ENCODE measurements at regions of chr10 and their contacts with region 1.

Region 1: GRCh38 chr10:113379091-113379490 is 173.8 kb upstream of the HABP2 start:
- DNase-seq: no peak
- H3K4me3 ChIP-seq: no peak overlapping the region
- H3K27ac ChIP-seq: no peak overlapping the region
- H3K4me1 ChIP-seq: no peaks in the 10 kb centered on the region
- H3K27me3 ChIP-seq: peaks cover 2% of the 10 kb centered on the region
- CTCF ChIP-seq: no peak

Region 2: DNA sequence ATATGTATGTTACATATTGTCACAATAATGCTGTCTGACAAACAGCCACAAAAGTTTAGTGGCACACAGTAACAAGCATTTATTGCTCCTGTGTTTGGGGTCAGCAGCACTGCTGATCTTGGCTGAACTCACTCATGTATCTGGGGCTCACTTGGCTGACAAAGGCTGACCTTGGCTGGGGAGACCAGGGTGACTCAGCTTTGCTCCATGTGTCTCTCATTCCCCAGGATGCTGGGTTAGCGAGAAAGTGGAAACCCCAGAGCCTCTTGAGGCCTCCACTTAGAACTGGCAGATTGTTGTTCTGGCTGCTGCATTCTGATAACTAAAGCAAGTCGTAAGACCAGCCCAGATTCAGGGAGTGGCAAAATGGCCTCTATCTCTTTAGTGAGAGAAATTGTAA is 43.5 kb before region 1 on chr10:
- CTCF ChIA-PET with region 1: no interaction called
- dilution Hi-C with region 1: no loop called
- in situ Hi-C with region 1: no loop called
- intact Hi-C with region 1: no loop called
- DNase-seq: peak; percentile 6
- H3K4me3 ChIP-seq: no peak overlapping the region
- H3K27ac ChIP-seq: no peak overlapping the region
- H3K4me1 ChIP-seq: no peaks in the 10 kb centered on the region
- H3K27me3 ChIP-seq: no peaks in the 10 kb centered on the region
- CTCF ChIP-seq: no peak

Region 3: GRCh38 chr10:113412161-113412560 is 33.1 kb after region 1 on chr10:
- CTCF ChIA-PET with region 1: no interaction called
- dilution Hi-C with region 1: loop called (anchors 5 kb)
- in situ Hi-C with region 1: no loop called
- intact Hi-C with region 1: no loop called
- DNase-seq: no peak
- H3K4me3 ChIP-seq: no peak overlapping the region
- H3K27ac ChIP-seq: no peak overlapping the region
- H3K4me1 ChIP-seq: no peaks in the 10 kb centered on the region
- H3K27me3 ChIP-seq: peaks cover 2% of the 10 kb centered on the region
- CTCF ChIP-seq: no peak

Region 4: GRCh38 chr10:113498997-113499396 is 119.9 kb after region 1 on chr10:
- CTCF ChIA-PET with region 1: no interaction called
- dilution Hi-C with region 1: no loop called
- in situ Hi-C with region 1: no loop called
- intact Hi-C with region 1: no loop called
- DNase-seq: peak; percentile 59
- H3K4me3 ChIP-seq: no peak overlapping the region
- H3K27ac ChIP-seq: no peak overlapping the region
- H3K4me1 ChIP-seq: peaks cover 11% of the 10 kb centered on the region
- H3K27me3 ChIP-seq: no peaks in the 10 kb centered on the region
- CTCF ChIP-seq: no peak

Region 5: DNA sequence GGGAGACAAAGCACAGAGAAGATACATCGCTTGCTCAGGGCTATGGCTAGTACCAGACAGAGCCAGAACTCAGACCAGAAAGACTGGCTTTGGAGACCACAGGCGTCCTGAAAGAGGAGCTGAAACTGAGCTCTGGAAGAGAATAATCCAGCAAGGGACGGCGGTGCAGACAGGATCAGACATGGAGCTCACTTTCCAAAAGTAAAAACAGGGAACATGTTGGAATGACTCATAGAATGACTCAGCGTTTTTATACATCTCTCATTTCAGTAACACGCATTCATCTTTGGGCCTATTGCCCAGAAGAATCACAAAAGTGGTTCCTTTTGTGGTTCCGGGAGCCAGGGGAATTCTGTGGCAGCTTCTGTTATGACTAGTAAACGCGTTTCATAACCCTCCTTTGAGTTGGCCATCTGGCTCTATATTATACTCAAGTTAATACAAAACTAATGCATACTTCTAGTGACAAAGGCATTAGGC is 409.6 kb after region 1 on chr10:
- CTCF ChIA-PET with region 1: no interaction called
- dilution Hi-C with region 1: no loop called
- in situ Hi-C with region 1: no loop called
- intact Hi-C with region 1: no loop called
- DNase-seq: peak; percentile 98
- H3K4me3 ChIP-seq: no peak overlapping the region
- H3K27ac ChIP-seq: peak overlapping the region; percentile 9
- H3K4me1 ChIP-seq: peaks cover 12% of the 10 kb centered on the region
- H3K27me3 ChIP-seq: no peaks in the 10 kb centered on the region
- CTCF ChIP-seq: no peak

Measured in mammary epithelial cell (primary cell).